ENCODE measurements at regions of chr10 and their contacts with region 1.

Region 1: GRCh38 chr10:43502931-43503330 is 66.0 kb downstream of the ZNF487 start:
- DNase-seq: no peak
- ATAC-seq: no peak

Region 2: GRCh38 chr10:42998481-42999384 is 504.2 kb before region 1 on chr10:
- intact Hi-C with region 1: loop called (anchors 10 kb)
- DNase-seq: no peak
- ATAC-seq: no peak

Measured in Right ventricle myocardium superior (tissue), 1 donor.